ENCODE measurements at regions of chr12 and their contacts with region 1.

Region 1: GRCh38 chr12:94101738-94102660 is 46.4 kb upstream of the PLXNC1 start:
- DNase-seq: peak; percentile 86
- ATAC-seq: peak; percentile 91

Region 2: DNA sequence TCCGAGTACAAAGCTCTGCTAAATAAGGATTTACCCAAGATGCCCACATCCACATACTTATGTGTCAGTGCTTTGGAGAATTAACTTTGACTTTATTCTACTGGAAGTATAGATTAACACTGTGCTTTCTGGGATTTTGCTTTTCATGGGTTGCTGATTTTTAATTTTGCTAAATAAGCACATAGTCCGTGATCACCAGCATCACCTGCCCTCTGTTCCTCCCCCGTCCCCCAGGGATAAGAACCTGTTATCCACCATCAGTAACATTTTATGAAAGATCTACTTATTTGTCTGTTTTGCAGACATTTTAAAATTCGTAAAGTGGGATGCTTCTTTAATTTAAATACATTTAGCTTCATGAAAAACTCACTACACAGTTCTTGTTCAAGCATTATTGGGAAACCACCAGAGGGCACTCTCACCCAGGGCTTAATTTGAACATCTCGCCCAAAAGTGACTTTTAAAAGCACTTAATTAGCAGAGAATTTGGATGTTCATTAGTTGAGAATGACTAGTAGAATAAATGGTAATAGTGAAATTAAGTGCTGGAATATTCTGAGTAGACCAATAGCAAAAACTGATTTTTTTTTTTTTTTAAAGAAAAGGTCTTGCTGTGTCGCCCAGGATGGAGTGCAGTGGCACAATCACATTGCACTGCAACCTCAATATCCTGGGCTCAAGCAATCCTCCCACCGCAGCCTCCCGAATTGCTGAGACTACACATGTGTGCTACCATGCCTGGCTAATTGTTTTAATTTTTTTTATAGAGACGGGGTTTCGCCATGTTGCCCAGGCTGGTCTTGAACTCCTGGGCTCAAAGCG is 599.0 kb before region 1 on chr12:
- intact Hi-C with region 1: loop called (anchors 5 kb)
- DNase-seq: no peak
- ATAC-seq: no peak

Region 3: GRCh38 chr12:93766796-93767523 is 335.0 kb before region 1 on chr12:
- intact Hi-C with region 1: loop called (anchors 10 kb)
- DNase-seq: no peak
- ATAC-seq: peak; percentile 83

Region 4: DNA sequence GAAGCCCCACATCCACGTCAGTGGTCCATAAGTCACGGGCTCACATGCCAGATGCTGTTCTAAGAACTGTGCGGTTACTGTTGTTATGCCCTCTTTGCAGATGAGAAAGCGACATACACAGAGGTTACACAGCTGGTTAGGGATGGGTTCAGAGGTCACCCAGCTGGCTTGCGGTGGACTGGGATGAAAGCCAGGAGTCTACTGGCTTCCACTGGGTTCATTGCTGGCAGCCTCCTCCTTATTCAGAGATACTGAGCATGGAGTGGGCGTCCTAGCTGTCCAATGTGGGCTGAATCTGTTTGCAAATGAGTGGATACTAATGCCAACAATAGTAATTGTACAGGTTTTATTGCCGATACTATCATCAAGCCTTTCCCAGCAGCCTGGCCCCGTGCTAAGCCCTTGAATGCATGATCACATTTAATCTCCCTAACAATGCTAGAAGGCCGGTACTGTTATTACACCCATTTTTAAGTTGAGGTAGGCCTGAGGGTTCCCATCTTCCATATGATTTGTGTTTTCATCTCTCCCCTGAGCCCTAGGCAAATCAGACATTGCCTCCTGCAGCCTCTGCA is 175.5 kb after region 1 on chr12:
- intact Hi-C with region 1: no loop called
- DNase-seq: no peak
- ATAC-seq: peak; percentile 66

Region 5: GRCh38 chr12:94498073-94498472 is 396.1 kb after region 1 on chr12:
- intact Hi-C with region 1: no loop called
- DNase-seq: no peak
- ATAC-seq: no peak